Astrocyte of the cerebellum (primary cell): ENCODE measurements at regions of chr12 and their contacts with region 1.

Region 1: DNA sequence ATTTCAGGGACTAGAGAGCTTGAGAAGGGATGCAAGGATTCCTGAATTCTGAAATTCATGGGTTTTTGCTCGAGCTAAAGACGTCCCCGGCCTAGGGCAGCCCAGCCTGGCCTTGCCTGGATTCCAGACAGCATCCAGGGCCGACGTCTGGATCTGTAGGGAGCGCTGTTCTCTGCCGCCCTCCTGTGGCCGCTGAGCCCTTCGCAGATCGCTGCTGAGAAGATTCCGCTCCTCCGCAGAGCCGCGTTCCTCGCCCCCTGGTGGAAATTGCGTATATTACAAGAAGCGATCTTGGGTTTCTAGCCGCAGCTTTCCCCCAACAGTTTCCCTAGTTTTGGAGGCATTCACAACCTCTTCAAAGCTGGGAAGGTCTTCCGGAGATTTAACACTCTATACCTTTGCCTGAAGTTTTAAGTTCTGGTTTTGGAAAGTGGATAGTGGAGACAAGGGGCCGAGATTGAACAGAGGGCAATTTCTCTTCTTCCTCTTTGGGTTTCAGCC is 5.1 kb downstream of the CISTR start:
- DNase-seq: peak; percentile 81
- H3K4me3 ChIP-seq: no peak overlapping the region
- CTCF ChIP-seq: peak; percentile 100

Region 2: DNA sequence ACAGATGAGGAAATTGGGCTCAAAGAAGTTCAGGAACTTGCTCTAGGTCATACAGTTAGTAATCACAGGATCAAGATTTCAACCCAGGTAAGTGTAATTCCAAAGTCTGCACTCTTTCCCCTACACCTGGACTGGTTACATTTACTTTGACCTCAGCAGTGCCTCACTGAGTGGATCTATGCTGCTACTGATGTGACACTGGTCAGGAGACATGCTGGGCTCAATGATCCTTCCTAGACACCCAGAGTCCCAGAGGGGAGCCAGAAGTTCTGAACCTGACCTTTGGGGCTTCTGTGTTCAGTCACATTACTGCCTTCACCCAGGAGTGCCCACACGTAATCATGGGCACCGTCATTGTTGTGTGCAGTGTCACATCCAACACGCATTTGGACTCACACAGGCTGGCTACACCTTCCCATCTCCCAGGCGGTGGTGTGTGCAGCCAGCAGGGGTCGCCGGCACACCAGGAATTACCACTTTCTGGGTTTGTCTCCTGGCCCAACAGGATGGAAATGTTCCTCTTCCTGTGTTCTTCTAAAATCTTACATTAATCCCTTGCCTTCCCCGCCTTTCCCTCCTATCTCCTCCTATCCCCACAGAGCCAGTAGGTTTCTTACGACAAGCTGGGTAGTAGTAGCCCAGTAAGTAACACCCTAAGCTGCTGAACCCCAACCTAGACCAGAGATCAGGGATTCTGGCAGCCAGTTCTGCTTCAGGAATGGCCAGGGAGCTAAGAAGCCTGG is 45.0 kb before region 1 on chr12:
- in situ Hi-C with region 1: loop called (anchors 5 kb)
- DNase-seq: peak; percentile 45
- H3K4me3 ChIP-seq: no peak overlapping the region
- CTCF ChIP-seq: peak; percentile 88

Region 3: DNA sequence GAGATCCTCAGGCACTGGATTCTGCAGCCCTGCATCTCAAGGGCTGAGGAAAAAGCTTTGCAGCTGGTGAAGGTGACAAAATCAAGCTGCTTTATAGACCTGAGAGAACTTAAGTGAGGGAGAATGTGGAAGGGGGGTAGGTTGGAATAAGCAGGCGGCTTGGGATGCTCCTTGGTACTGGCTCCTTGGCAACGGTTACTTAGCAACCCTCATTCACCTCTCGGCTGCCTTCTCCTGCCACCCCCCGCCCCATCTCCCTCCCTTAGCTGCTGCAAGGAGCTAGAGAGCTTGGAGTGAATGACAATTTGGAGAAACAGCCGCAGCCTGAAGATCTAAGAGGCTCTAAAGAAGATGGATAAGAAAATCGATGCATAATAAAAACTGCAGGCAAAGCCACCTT is 49.3 kb after region 1 on chr12:
- in situ Hi-C with region 1: no loop called
- DNase-seq: no peak
- H3K4me3 ChIP-seq: no peak overlapping the region
- CTCF ChIP-seq: no peak

Region 4: GRCh38 chr12:53806721-53807120 is 60.1 kb after region 1 on chr12:
- in situ Hi-C with region 1: no loop called
- DNase-seq: no peak
- H3K4me3 ChIP-seq: no peak overlapping the region
- CTCF ChIP-seq: no peak